ENCODE measurements at regions of chr17 and their contacts with region 1.

Region 1: DNA sequence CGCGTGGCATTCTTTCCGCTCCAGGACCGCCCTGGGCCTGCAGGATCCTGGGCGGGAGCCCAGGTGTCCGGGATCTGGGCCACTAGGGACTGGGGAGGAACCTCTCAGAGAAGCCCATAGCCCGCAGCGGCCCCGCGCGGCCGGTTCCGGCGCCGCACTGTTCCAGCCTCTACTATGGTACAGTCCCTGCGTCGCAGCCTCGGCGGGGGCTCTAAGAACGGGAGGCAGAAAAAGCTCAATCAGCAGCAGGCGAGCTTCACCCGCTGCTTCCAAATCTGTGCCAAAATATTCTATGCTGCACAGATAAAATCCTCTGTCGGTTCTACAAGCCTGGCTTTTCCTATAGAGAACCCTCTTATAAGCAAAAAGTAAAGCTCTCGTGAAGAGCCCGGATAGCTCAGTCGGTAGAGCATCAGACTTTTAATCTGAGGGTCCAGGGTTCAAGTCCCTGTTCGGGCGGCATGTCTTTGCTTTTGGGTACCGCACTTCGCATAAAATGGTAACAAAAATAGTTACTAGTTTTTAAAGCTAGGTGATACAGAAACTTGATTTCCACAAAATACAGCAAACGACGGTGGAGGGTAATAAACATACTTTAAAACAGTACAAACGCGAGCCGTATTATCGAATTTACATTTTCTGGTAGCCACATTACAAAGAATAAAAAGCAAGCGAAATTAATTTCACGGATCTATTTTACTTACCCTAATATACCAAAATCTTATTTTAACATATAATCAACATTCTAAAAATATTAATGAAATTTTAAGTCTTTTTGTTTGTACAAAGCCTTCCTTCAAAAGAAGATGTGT is 661 bp upstream of the ALOXE3 start:
- DNase-seq: peak; percentile 89
- H3K4me3 Mint-ChIP-seq: peak overlapping the region; percentile 86
- H3K27ac Mint-ChIP-seq: peak overlapping the region; percentile 94
- H3K4me1 Mint-ChIP-seq: peaks cover 59% of the 10 kb centered on the region
- H3K27me3 Mint-ChIP-seq: peaks cover 91% of the 10 kb centered on the region

Region 2: GRCh38 chr17:7767405-7768021 is 351.5 kb before region 1 on chr17:
- CTCF ChIA-PET with region 1: no interaction called
- DNase-seq: no peak
- H3K4me3 Mint-ChIP-seq: no peak overlapping the region
- H3K27ac Mint-ChIP-seq: no peak overlapping the region
- H3K4me1 Mint-ChIP-seq: no peaks in the 10 kb centered on the region
- H3K27me3 Mint-ChIP-seq: peaks cover 32% of the 10 kb centered on the region

Region 3: DNA sequence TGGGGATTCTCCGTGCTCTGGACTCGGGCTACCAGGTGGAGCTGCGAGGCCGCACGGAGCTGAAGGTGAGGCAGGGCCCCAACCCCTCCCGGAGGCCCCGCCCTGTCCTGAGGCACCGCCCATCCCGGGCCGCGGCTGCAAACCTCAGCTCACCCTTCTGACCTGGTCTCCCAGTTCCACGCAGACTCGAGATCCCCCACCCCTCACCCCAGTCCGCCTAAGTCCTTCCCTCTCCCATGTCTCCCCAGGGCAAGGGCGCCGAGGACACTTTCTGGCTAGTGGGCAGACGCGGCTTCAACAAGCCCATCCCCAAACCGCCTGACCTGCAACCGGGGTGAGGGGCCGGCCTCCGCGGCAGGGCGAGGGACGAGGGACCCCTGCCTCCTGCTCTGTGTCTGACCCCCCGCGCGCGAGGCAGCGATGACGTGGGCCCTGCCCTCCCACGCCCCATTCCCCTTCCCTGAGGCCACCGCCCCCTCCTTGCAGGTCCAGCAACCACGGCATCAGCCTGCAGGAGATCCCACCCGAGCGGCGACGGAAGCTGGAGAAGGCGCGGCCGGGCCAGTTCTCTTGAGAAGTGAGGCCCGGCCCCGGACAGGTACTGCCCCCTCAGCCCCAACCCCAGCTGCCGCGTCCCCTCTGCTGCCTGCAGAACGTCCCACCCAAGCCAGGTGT is 102.9 kb before region 1 on chr17:
- CTCF ChIA-PET with region 1: no interaction called
- DNase-seq: peak; percentile 46
- H3K4me3 Mint-ChIP-seq: peak overlapping the region; percentile 62
- H3K27ac Mint-ChIP-seq: no peak overlapping the region
- H3K4me1 Mint-ChIP-seq: peaks cover 8% of the 10 kb centered on the region
- H3K27me3 Mint-ChIP-seq: peaks cover 90% of the 10 kb centered on the region

Region 4: DNA sequence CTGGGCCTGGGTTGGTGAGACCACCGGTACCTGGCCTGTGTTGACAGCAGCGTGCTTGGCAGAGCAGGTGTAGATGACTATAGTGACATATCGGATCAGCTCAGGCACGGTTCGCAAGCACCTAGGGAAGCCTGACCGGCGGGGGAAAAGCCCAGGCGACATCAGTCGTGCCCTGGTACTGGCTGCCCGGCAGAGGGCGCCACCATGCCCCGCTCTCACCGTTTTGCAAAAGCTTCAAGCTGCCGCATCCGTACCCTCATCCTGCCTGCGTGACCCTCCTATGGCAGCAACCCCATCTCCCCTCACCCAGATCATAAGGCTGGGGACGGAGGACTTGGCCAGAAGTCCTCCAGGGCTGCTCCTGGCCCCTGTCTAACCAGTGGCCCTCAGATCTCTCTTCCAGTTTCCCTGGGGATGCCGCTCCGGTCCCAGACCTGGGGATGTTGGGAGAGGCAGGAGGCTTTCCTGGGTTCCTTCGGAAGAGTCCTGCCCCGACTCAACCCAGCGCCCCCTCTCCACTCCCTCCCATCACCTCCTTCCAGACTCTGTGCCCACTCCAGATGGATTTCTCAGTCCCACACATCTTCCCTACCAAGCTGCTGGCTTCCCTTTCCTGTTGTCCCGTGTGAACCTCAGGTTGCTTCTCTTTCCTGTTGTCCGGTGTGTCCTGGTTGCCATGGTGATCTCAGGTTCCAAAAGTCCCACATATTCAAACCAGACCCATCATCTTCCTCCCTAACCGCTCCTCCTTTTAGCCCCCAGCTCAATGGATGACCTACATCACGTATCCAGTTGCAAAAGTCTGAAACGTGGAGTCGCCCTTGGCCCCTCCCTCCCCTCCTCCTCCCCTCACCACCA is 45.1 kb before region 1 on chr17:
- CTCF ChIA-PET with region 1: interaction called, 20 read pairs
- DNase-seq: peak; percentile 89
- H3K4me3 Mint-ChIP-seq: peak overlapping the region; percentile 65
- H3K27ac Mint-ChIP-seq: peak overlapping the region; percentile 21
- H3K4me1 Mint-ChIP-seq: peaks cover 30% of the 10 kb centered on the region
- H3K27me3 Mint-ChIP-seq: peaks cover 89% of the 10 kb centered on the region

Region 5: GRCh38 chr17:8079291-8080207 is 39.4 kb before region 1 on chr17:
- CTCF ChIA-PET with region 1: interaction called, 20 read pairs
- DNase-seq: peak; percentile 81
- H3K4me3 Mint-ChIP-seq: peak overlapping the region; percentile 83
- H3K27ac Mint-ChIP-seq: peak overlapping the region; percentile 73
- H3K4me1 Mint-ChIP-seq: peaks cover 17% of the 10 kb centered on the region
- H3K27me3 Mint-ChIP-seq: peaks cover 35% of the 10 kb centered on the region

Region 6: GRCh38 chr17:8091033-8091687 is 27.8 kb before region 1 on chr17:
- CTCF ChIA-PET with region 1: interaction called, 38 read pairs
- DNase-seq: no peak
- H3K4me3 Mint-ChIP-seq: no peak overlapping the region
- H3K27ac Mint-ChIP-seq: no peak overlapping the region
- H3K4me1 Mint-ChIP-seq: peaks cover 20% of the 10 kb centered on the region
- H3K27me3 Mint-ChIP-seq: peaks cover 92% of the 10 kb centered on the region

Region 7: DNA sequence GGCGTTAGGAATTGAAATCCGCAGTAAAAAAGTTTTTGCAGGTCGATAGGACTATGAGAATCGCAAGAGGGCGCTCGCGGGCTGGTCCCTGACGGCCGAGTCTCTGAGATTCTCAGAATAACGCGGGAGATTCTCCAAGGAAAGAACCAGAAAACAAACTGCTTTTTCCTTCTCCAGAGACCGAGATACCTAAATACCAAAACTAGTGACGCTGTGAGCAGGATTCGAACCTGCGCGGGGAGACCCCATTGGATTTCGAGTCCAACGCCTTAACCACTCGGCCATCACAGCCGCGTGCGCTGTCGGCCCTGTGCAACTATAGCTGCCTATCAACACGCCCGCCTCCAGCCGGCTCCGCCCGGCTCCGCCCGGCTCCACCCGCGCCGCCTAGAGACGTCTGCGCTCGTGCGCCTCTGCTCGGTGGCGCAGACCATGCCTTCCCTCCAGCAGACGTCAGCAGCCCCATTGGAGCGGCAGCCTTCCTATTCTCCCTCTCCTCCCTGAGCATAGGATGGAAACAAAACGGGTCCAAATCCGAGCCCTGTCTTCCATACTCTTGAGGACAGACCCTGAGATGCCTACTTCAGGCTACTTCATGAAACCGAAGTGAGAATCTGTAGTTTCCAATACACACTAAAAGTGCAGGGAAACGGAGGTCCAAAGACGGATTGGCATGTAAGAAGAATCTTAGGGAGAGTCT is 19.8 kb after region 1 on chr17:
- CTCF ChIA-PET with region 1: interaction called, 11 read pairs
- DNase-seq: peak; percentile 97
- H3K4me3 Mint-ChIP-seq: no peak overlapping the region
- H3K27ac Mint-ChIP-seq: no peak overlapping the region
- H3K4me1 Mint-ChIP-seq: peaks cover 10% of the 10 kb centered on the region
- H3K27me3 Mint-ChIP-seq: peaks cover 15% of the 10 kb centered on the region

Region 8: GRCh38 chr17:8222630-8223356 is 103.8 kb after region 1 on chr17:
- CTCF ChIA-PET with region 1: interaction called, 13 read pairs
- DNase-seq: peak; percentile 93
- H3K4me3 Mint-ChIP-seq: peak overlapping the region; percentile 96
- H3K27ac Mint-ChIP-seq: peak overlapping the region; percentile 100
- H3K4me1 Mint-ChIP-seq: peaks cover 69% of the 10 kb centered on the region
- H3K27me3 Mint-ChIP-seq: peaks cover 15% of the 10 kb centered on the region